ENCODE measurements at regions of chr5 and their contacts with region 1.

Region 1: GRCh38 chr5:154534457-154535050 is 56.5 kb upstream of the HAND1 start:
- DNase-seq: no peak
- H3K4me3 ChIP-seq: no peak overlapping the region
- CTCF ChIP-seq: no peak
- POLR2A ChIP-seq: no peak

Region 2: DNA sequence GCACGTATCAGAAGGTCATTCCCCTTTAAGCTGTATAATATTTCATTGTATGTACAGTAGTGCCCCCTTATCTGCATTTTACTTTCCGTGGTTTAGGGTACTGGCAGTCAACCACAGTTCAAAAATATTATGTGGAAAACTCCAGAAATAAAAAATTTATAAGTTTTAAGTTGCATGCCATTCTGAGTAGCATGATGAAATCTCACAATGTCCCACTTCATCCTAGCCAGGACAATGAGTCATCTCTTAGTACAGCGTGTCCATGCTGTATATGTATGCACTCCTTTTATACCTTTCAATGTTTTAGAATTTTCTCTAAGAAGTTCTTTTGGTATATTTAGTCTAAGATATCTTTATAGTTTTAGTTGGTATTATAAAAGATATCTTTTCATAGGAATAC is 58.5 kb after region 1 on chr5:
- intact Hi-C with region 1: loop called (anchors 10 kb)
- DNase-seq: no peak
- H3K4me3 ChIP-seq: no peak overlapping the region
- CTCF ChIP-seq: no peak
- POLR2A ChIP-seq: no peak

Region 3: GRCh38 chr5:154899151-154899816 is 364.7 kb after region 1 on chr5:
- intact Hi-C with region 1: no loop called
- DNase-seq: peak; percentile 67 to 87
- H3K4me3 ChIP-seq: no peak overlapping the region
- CTCF ChIP-seq: no peak
- POLR2A ChIP-seq: no peak

Measured in lower leg skin (tissue), 4 donors.